Prostate gland (tissue), 2 donors: ENCODE measurements at regions of chr6 and their contacts with region 1.

Region 1: DNA sequence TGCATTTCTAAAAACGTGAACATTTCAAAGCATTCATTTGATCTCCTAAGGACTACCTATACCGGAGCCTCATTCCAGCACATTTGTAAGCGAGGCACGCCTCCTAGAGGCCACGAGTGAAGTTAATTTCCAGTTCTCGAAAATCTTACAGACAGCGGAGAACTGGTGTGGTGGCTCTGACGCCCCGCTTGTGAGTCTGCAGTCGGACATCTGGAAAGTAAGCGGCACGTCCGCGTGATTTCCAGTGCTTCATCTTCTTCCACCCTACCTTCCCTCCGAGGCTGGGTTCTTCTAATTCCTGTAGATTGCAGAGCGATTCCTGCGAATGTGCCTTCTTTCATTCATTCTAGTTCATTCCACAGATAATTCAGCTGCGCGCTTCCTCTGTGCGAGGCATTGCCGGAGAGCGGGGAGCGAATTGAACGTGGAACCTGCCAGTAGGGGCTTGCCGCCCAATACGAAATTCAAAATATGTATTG is 810 bp upstream of the PRIM2 start:
- DNase-seq: peak; percentile 85
- H3K4me3 ChIP-seq: peak overlapping the region; percentile 41 to 46
- H3K27ac ChIP-seq: peak overlapping the region; percentile 51 to 74
- H3K4me1 ChIP-seq: peaks cover 5% of the 10 kb centered on the region
- H3K27me3 ChIP-seq: no peaks in the 10 kb centered on the region
- CTCF ChIP-seq: peak; percentile 44 to 90 (median 82)
- POLR2A ChIP-seq: no peak

Region 2: DNA sequence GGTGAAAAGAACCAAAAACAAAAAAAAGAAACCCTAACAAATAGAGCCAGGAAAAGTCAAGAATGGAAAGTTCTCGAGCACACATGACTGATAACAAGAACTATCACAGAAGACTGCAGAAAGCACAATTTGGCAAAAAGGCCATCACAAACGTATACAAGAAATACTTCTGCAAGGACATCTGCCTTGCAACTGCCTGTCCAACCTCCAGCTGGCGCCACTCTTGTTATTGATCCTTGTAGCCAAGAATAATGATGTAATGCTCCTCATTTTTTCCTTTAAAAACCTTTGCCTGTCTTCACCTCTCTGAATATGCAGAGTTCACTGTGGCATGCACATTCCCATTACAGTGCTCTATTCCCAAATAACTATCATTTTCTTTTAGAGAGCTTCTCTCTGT is 1353.3 kb before region 1 on chr6:
- intact Hi-C with region 1: no loop called
- DNase-seq: no peak
- H3K4me3 ChIP-seq: no peak overlapping the region
- H3K27ac ChIP-seq: no peak overlapping the region
- H3K4me1 ChIP-seq: no peaks in the 10 kb centered on the region
- H3K27me3 ChIP-seq: no peaks in the 10 kb centered on the region
- CTCF ChIP-seq: no peak
- POLR2A ChIP-seq: no peak

Region 3: GRCh38 chr6:56902641-56903464 is 413.8 kb before region 1 on chr6:
- intact Hi-C with region 1: loop called (anchors 5 kb)
- DNase-seq: no peak
- H3K4me3 ChIP-seq: no peak overlapping the region
- H3K27ac ChIP-seq: no peak overlapping the region
- H3K4me1 ChIP-seq: no peaks in the 10 kb centered on the region
- H3K27me3 ChIP-seq: no peaks in the 10 kb centered on the region
- CTCF ChIP-seq: peak; percentile 37 to 60 (median 52)
- POLR2A ChIP-seq: no peak

Region 4: DNA sequence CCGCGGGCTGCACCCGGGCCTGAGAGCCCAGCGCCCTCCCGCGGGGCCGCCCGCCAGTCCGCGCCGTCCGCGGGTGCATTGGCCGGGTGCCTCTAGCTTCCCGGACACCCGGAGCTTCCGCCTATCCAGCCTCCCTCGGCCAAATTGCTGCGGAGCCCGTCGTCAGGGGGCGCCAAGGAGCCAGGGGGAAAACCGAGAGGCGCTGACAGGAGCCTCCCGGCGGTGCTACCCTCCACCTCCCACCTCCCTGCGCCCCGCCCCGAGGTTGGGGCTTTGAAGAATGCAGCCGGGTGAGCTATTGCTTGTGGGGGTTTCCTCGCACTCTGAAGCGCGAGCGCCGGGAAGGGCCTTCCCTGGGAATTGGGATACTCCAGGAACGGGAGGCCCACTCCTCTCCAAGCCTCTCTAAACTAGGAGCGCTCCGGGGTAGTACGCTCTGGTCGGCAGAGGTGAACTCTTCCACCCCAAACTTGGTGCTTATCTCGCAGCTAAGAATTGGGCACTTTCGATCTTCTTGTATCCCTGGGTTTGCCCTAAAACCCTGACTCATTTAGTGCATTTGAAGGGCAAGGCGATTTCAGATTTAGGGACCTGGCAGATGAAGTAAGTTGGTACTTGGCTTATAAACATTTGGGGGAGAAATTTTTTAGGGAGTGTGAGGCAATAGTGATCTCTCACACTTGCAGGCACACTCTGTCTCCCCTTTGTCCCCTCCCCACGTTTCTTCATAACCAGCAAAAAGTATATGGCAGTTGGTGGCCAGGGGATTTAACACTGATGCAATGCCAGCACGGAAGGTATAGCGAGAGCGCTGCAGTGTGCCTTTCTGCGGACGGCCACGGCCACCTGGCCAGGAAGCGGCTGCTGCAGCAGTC is 361.2 kb before region 1 on chr6:
- intact Hi-C with region 1: loop called (anchors 5 kb)
- DNase-seq: peak; percentile 69
- H3K4me3 ChIP-seq: peak overlapping the region; percentile 50 to 57
- H3K27ac ChIP-seq: peak overlapping the region in 1 of 2 donors; percentile 50
- H3K4me1 ChIP-seq: no peaks in the 10 kb centered on the region
- H3K27me3 ChIP-seq: no peaks in the 10 kb centered on the region
- CTCF ChIP-seq: peak; percentile 26 to 67 (median 64)
- POLR2A ChIP-seq: no peak

Region 5: GRCh38 chr6:57048577-57048976 is 268.0 kb before region 1 on chr6:
- intact Hi-C with region 1: loop called (anchors 5 kb)
- DNase-seq: no peak
- H3K4me3 ChIP-seq: no peak overlapping the region
- H3K27ac ChIP-seq: no peak overlapping the region
- H3K4me1 ChIP-seq: no peaks in the 10 kb centered on the region
- H3K27me3 ChIP-seq: no peaks in the 10 kb centered on the region
- CTCF ChIP-seq: no peak
- POLR2A ChIP-seq: no peak

Region 6: DNA sequence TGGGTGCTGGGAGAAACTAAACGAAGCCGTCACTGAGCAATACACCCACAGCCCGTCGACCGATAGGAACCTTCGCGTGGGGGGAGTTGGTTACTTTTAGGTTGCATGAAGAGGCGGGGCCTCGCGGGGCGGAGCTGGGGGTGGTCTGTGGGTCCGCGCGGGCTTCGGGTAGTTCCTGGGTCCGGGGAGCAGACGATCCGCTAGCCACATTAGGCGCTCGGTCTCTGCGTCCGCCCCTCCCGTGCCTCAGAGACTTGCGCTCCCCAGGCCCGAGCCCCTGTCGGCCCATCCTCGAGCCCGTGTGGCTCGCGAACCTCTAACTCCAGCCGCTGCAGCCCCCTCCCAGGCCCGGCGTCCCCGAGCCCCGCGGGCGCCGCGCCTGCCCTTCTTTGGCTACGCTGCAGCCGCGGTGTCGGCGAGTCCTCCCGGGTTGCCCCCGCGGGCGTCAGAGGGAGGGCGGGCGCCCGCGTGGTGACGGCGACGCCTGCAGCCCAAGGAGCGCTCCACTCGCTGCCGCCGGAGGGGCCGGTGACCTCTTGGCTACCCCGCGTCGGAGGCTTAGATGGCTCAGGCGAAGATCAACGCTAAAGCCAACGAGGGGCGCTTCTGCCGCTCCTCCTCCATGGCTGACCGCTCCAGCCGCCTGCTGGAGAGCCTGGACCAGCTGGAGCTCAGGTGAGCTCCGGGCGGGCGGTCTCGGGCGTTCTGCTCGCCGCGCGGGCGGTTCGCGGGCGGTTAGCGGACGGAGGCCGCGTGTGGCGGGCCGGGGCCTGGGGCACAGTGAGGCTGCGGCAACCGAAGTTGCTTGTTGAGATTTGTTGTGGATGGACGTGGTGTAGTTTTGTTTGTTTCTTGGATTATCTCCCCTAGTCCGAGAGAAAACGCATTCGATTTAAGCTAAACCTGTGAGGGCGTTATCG is 144.2 kb before region 1 on chr6 and contains the start of gene BAG2:
- intact Hi-C with region 1: loop called (anchors 5 kb)
- DNase-seq: peak; percentile 68
- H3K4me3 ChIP-seq: peak within 1 kb of the TSS; percentile 66 to 80
- H3K27ac ChIP-seq: peak within 1 kb of the TSS; percentile 88 to 89
- H3K4me1 ChIP-seq: no peaks in the 10 kb centered on the region
- H3K27me3 ChIP-seq: no peaks in the 10 kb centered on the region
- CTCF ChIP-seq: peak in 2 of 4 experiments; percentile 13 to 47
- POLR2A ChIP-seq: peak; percentile 48
- total RNA-seq, gene BAG2: 5.4 to 6.8 TPM

Region 7: DNA sequence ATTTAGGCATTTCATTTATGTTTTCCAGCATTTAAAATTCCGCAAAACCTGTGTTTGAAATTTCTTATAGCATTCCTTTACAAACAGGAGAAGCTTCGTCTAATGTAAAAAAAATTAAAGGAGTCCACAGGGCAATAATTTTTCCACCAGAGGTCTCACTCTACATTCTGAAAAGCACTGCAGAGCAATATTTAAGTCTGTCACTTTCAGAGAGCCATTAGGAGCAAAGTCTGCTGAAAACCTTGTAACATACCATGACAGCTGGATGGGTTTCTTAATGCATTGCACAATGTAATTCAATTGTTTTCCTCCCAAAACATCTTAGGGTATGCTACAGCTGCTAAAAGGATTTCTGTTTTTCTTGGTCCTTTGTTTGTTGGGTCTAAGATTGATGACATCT is 126.5 kb before region 1 on chr6:
- intact Hi-C with region 1: loop called (anchors 5 kb)
- DNase-seq: no peak
- H3K4me3 ChIP-seq: no peak overlapping the region
- H3K27ac ChIP-seq: no peak overlapping the region
- H3K4me1 ChIP-seq: no peaks in the 10 kb centered on the region
- H3K27me3 ChIP-seq: no peaks in the 10 kb centered on the region
- CTCF ChIP-seq: peak in 3 of 4 experiments; percentile 42 to 63 (median 49)
- POLR2A ChIP-seq: no peak

Region 8: GRCh38 chr6:57262901-57263694 is 53.5 kb before region 1 on chr6:
- intact Hi-C with region 1: loop called (anchors 5 kb)
- DNase-seq: no peak
- H3K4me3 ChIP-seq: no peak overlapping the region
- H3K27ac ChIP-seq: peak overlapping the region; percentile 34 to 48
- H3K4me1 ChIP-seq: no peaks in the 10 kb centered on the region
- H3K27me3 ChIP-seq: no peaks in the 10 kb centered on the region
- CTCF ChIP-seq: no peak
- POLR2A ChIP-seq: no peak